ENCODE measurements at regions of chr1 and their contacts with region 1.

Region 1: GRCh38 chr1:224329842-224330753 is at the start of gene NVL:
- DNase-seq: peak; percentile 93
- H3K4me3 ChIP-seq: peak within 1 kb of the TSS; percentile 75 to 84 (median 82)
- H3K27ac ChIP-seq: peak within 1 kb of the TSS; percentile 85 to 93 (median 88)
- H3K4me1 ChIP-seq: peaks cover 9 to 39% (median 29%) of the 10 kb centered on the region in 4 donors
- H3K27me3 ChIP-seq: no peaks in the 10 kb centered on the region
- CTCF ChIP-seq: no peak
- EP300 ChIP-seq: no peak
- POLR2A ChIP-seq: no peak
- total RNA-seq, gene NVL: 11.0 to 19.5 (median 15.9) TPM

Region 2: DNA sequence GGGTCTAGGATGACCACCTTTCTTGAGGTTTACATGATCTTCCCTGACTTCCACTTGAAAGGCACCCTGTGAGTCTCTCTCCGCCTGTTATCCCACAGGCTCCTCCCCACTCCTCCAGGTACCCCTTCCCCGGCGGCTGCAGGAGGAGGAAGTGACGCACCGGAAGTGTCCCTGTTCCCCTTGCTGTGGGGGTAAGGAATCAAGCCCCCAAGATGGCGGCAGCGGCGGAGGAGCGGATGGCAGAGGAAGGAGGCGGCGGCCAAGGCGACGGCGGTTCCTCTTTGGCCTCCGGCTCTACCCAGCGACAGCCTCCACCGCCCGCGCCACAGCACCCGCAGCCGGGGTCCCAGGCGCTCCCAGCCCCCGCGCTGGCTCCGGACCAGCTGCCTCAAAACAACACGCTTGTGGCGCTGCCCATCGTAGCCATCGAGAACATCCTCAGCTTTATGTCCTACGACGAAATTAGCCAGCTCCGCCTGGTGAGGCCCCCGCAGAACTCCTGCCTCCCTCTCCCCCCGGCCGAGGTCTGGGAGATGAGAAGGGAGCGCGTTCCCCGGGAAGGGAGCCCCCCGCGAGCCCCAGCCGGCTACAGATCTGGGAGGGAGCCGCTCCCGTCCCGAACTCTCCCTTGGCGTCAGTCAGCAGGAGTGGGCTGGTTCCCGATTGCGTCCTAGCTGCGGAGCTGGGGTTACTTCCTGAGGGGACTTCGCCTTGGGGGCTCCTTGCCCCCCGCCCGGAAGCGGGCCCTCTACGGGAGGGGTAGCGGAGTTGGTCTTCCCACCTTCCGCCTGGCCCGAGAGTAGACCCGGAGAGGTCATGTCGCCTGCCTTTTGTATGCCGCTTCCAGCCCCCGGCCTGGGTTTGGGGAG is 215.9 kb before region 1 on chr1 and contains the start of gene FBXO28:
- intact Hi-C with region 1: loop called (anchors 2 kb)
- DNase-seq: peak; percentile 97
- H3K4me3 ChIP-seq: peak within 1 kb of the TSS; percentile 85 to 98 (median 92)
- H3K27ac ChIP-seq: peak within 1 kb of the TSS; percentile 90 to 96 (median 93)
- H3K4me1 ChIP-seq: peaks cover 14 to 43% (median 35%) of the 10 kb centered on the region in 4 donors
- H3K27me3 ChIP-seq: peaks cover 0 to 16% (median 0%) of the 10 kb centered on the region in 4 donors
- CTCF ChIP-seq: no peak
- EP300 ChIP-seq: no peak
- POLR2A ChIP-seq: peak; percentile 73
- total RNA-seq, gene FBXO28: 23.1 to 29.8 (median 26.3) TPM

Region 3: DNA sequence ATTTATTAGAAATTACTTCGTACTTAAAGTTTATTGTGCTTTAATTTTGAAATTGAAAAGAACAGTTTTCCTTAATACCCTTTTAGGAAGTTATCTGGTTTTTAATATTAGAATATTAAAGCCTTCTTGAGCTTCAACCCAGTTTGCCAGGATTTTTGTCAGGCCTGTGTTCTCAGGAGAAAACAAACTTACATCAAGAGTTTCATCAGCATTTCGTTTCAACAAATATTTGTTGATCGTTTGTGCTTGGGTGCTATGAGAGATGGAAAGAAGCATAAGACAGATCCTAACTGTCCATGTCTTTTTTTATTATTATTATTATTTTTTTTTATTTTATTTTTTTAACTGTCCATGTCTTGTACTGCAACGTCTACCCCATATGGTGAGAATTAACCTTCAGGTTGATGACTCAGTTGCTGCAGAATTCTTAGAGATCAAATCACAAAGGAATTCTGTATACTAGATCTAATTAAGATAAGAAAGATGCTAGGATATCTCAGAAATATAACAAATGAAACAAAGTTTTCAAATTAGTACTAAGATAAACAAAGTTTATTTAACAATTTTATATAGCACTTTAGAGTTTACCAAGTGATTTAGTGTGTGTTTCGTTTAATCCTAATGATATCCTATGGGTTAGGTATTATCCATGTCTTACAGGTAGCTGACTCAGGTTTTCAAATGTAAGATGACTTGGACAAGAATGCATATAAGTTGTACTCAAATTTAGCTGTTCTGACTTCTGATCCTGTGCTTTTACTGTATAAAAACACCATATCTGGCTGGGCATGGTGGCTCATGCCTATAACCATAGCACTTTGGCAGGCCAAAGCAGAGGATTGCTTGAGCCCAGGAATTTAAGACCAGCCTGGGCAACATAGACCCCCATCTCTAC is 201.9 kb before region 1 on chr1:
- intact Hi-C with region 1: no loop called
- DNase-seq: no peak
- H3K4me3 ChIP-seq: no peak overlapping the region
- H3K27ac ChIP-seq: no peak overlapping the region
- H3K4me1 ChIP-seq: peaks cover 0 to 24% (median 10%) of the 10 kb centered on the region in 4 donors
- H3K27me3 ChIP-seq: no peaks in the 10 kb centered on the region
- CTCF ChIP-seq: no peak
- EP300 ChIP-seq: no peak
- POLR2A ChIP-seq: no peak

Region 4: DNA sequence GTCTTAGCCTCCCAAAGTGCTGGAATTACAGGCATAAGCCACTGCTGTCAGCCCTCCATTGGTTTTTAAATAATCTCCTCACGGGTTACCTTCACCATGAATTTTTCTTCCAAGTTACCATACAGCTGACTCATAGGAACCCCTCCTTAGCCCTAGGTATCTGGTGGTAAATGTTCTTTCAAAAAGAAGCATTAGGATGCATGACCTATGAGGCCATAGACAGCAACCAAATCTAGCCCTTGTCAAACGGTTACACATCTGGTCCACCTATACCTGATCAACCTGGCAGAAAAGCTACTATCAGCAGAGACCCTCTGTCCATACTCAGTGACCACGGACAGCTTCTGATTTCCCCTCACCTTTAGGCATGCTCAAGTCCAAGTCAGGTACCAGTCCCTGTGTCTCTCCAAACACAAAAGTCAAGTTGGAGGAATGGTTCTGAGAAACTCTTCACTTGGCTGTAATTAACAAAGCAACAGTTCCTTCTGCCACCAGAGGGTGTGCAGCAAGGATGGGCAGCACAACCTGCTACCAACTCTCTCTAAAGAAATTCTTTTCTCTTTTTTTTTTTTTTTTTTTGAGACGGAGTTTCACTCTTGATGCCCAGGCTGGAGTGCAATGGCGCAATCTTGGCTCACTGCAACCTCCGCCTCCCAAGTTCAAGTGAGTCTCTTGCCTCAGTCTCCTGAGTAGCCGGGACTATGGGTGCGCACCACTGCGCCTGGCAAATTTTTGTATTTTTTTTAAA is 159.6 kb before region 1 on chr1:
- intact Hi-C with region 1: loop called (anchors 5 kb)
- DNase-seq: no peak
- H3K4me3 ChIP-seq: no peak overlapping the region
- H3K27ac ChIP-seq: no peak overlapping the region
- H3K4me1 ChIP-seq: peaks cover 10 to 17% (median 14%) of the 10 kb centered on the region in 4 donors
- H3K27me3 ChIP-seq: no peaks in the 10 kb centered on the region
- CTCF ChIP-seq: peak; percentile 29 to 48 (median 31)
- EP300 ChIP-seq: no peak
- POLR2A ChIP-seq: no peak

Region 5: GRCh38 chr1:224273641-224274040 is 56.5 kb before region 1 on chr1:
- intact Hi-C with region 1: no loop called
- DNase-seq: no peak
- H3K4me3 ChIP-seq: no peak overlapping the region
- H3K27ac ChIP-seq: no peak overlapping the region
- H3K4me1 ChIP-seq: no peaks in the 10 kb centered on the region
- H3K27me3 ChIP-seq: no peaks in the 10 kb centered on the region
- CTCF ChIP-seq: no peak
- EP300 ChIP-seq: no peak
- POLR2A ChIP-seq: no peak

Region 6: DNA sequence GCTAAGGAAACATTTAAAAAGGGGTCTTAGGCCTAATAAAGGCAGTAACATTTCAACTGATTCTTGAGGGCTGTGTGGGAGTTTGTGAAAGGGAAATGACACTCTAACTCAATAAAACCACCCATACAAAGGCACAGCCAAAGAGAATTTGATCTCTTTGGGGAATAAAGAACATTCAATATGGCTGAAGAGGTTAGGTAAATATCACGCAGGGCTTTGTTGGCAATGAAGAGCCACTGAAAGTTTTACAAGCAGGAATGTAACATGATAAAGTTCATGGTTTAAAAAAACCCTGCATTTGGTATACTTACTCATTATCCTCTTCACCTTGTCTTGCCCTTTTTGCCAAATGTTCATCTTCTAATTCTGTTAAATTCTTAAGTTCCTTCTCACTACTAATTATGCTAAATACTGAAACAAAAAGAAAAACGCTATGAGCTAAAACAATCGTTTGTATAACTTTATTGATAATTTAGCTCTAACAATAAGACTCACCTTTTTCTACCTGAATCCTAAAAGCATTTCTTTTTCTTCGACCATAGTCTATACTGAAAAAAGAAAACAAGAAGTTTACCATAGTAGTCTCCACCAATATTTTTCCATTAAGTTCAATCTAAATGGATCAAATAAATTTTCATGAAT is 12.6 kb before region 1 on chr1:
- intact Hi-C with region 1: no loop called
- DNase-seq: no peak
- H3K4me3 ChIP-seq: no peak overlapping the region
- H3K27ac ChIP-seq: no peak overlapping the region
- H3K4me1 ChIP-seq: no peaks in the 10 kb centered on the region
- H3K27me3 ChIP-seq: no peaks in the 10 kb centered on the region
- CTCF ChIP-seq: no peak
- EP300 ChIP-seq: no peak
- POLR2A ChIP-seq: no peak

Region 7: DNA sequence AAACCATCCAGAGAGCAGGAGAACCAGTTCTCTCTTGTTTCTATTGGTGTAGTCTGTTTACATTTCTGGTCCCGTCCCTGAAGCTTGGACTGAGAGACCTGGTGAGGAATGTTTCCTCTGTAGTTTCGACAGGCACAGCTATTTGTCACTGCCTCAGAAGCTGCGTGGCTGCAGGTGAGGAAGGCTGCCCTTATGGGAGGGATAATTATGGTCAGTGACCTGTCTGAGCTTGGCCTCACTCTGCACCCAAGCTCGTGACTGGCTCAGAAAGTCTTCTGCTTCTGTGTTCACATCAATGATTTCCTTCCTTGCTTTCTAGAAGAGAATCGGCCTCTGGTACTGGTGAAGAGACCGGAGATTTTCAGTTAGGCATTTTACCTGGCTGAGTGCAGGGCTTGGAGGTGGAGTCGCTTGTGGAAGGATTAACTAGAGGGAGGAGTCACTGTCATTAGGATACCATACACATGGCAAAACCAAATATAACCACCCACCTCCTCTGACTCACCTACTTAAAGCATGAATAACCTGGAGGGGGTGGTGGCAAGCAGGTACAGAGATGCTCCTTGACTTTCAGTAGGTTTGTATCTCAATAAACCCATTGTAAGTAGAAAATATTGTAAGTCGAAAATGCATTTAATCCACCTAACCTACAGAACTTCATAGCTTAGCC is 124.4 kb after region 1 on chr1:
- intact Hi-C with region 1: loop called (anchors 10 kb)
- DNase-seq: no peak
- H3K4me3 ChIP-seq: peak overlapping the region in 1 of 4 donors; percentile 11
- H3K27ac ChIP-seq: peak overlapping the region; percentile 61 to 76 (median 68)
- H3K4me1 ChIP-seq: peaks cover 20 to 59% (median 51%) of the 10 kb centered on the region in 4 donors
- H3K27me3 ChIP-seq: no peaks in the 10 kb centered on the region
- CTCF ChIP-seq: no peak
- EP300 ChIP-seq: no peak
- POLR2A ChIP-seq: no peak